ENCODE measurements at regions of chr19 and their contacts with region 1.

Region 1: DNA sequence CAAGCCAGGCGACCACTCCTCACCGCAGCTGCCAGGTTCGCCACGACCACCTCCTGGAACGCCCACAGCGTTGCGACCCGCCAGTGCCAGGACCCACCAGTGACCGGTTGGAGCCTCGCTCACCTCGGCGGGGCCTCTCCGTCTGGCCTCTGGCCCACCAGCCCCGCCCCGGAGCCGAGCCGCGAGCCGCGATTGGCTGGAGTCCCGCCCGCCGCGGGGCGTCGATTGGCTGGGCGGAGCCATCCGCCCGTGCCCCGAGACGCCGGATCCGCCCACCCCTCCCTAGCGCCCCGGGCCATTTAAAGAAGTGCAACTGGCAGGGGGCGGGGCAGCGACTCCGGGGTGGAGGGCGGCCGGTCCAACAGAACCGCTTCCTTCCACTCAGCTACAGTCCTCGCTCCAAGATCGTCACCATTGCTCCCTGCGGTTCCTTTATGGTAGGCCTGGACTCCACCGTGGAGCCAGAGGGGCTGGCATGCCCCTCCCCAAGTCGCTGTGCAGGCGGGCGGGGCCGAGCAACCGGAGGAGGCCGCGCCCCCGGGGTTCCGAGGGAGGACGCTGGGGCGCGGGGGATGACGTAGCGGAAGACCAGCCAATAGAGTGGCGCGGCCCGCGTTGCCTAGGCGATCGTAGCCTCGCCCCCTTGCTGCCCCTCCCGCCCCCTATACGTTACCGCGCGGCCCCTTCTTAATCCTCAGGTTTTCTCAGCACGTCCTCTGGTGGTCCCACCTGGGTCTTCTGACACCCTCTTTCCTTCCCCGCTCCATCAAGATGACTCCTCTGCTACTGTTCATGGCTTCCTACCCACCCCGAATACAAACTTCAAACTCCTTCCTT is at the start of gene SERTAD3:
- DNase-seq: peak; percentile 94 to 99 (median 98)
- ATAC-seq: peak; percentile 82
- H3K4me3 ChIP-seq: peak within 1 kb of the TSS; percentile 97
- H3K4me3 Mint-ChIP-seq: peak within 1 kb of the TSS; percentile 96 to 100 (median 98)
- H3K27ac ChIP-seq: peak within 1 kb of the TSS; percentile 89
- H3K27ac Mint-ChIP-seq: peak within 1 kb of the TSS; percentile 94 to 99 (median 97)
- H3K4me1 ChIP-seq: peaks cover 8 to 12% of the 10 kb centered on the region in 2 donors
- H3K4me1 Mint-ChIP-seq: peaks cover 17 to 31% (median 21%) of the 10 kb centered on the region in 7 donors
- H3K27me3 ChIP-seq: no peaks in the 10 kb centered on the region
- H3K27me3 Mint-ChIP-seq: no peaks in the 10 kb centered on the region
- total RNA-seq, gene SERTAD3: 15.2 to 44.1 (median 17.8) TPM

Region 2: DNA sequence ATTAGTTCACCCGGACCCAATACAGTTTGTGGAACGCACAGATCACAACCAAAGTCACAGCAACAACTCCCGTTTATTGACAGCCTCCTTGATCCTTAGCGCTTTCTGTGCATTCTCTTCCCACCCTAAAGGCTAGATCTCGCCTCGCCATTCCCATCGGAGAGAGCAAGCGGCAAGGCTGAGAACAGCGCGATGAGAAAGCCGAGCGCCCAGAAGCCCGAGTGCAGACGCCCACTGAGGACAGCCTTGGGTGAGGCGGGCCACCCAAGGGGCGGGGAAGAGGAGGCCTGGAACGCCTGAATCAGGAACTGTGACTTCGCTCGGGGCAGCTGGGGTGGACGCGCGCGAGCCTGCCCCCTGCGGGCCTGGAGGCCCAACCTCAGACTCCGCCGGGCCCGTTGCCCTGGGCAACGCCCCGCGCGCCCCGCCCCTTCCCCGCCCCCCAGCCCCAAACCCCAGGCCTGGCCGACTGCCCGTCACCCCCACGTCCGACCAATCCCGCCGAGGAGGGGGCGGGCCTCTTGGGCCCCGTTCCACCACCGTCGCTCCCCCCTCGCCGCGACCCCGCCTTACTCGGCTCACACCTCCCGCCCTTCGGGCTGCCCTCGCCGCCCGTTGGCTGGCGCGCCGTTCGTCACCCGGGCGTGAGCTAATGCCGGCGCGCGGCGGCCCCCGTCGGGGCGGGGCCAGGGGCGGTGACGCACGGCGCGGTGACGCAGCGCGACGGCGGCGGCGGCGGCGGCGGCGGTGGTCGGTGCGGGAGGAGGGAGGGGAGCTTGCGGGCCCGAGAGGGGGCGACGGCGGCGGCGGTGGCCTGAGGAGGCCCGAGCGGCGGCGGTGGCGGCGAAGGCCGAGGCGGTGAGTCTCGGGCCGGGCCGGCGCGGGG is 1102.4 kb before region 1 on chr19 and contains the start of gene SAMD4B:
- CTCF ChIA-PET with region 1: no interaction called
- POLR2A ChIA-PET with region 1: no interaction called
- intact Hi-C with region 1: loop called in 1 of 2 experiments (anchors 5 kb)
- DNase-seq: peak; percentile 97 to 100 (median 99)
- ATAC-seq: peak; percentile 93
- H3K4me3 ChIP-seq: peak within 1 kb of the TSS; percentile 95
- H3K4me3 Mint-ChIP-seq: peak within 1 kb of the TSS; percentile 90 to 100 (median 97)
- H3K27ac ChIP-seq: peak within 1 kb of the TSS; percentile 84
- H3K27ac Mint-ChIP-seq: peak within 1 kb of the TSS; percentile 90 to 97 (median 96)
- H3K4me1 ChIP-seq: peaks cover 23 to 42% of the 10 kb centered on the region in 2 donors
- H3K4me1 Mint-ChIP-seq: peaks cover 64 to 77% (median 73%) of the 10 kb centered on the region in 7 donors
- H3K27me3 ChIP-seq: no peaks in the 10 kb centered on the region
- H3K27me3 Mint-ChIP-seq: no peaks in the 10 kb centered on the region
- total RNA-seq, gene SAMD4B: 52.0 to 84.6 (median 65.6) TPM

Region 3: DNA sequence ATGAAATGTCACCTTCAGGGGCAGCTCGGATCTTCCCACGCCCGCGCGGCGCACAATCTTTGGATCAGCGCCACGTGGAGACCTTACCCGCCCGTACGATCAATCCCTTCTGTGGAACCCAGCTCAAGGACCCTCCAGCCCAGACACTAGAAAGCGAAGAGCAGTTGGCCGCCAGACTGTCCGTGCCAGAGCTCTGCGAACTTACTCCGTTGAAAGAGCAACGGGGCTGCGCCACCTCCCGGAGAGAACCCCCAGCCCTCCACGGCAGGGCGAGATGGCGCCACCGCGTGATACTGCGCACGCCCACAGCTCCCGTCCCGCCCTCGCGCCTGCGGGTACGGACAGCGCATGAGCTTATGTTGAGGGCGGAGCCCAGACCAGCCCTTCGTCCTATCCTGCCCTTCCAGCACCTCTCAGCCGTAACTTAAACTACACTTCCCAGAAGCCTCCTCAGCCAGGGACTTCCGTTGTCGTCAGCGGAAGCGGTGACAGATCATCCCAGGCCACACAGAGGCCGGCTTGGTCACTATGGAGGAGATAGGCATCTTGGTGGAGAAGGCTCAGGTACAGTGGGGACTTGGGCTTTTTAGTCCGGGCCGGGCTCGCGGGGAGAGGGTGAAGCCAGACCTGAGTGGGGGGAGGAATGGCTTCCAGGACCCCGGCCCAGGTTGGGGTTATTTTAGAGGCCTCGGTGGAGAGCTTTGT is 473.6 kb before region 1 on chr19 and contains the start of gene PSMC4:
- CTCF ChIA-PET with region 1: no interaction called
- POLR2A ChIA-PET with region 1: no interaction called
- intact Hi-C with region 1: loop called (anchors 5 to 10 kb)
- DNase-seq: peak; percentile 94 to 99 (median 98)
- ATAC-seq: peak; percentile 98
- H3K4me3 ChIP-seq: peak within 1 kb of the TSS; percentile 88
- H3K4me3 Mint-ChIP-seq: peak within 1 kb of the TSS; percentile 92 to 100 (median 94)
- H3K27ac ChIP-seq: peak within 1 kb of the TSS; percentile 95
- H3K27ac Mint-ChIP-seq: peak within 1 kb of the TSS; percentile 95 to 99 (median 97)
- H3K4me1 ChIP-seq: peaks cover 27 to 32% of the 10 kb centered on the region in 2 donors
- H3K4me1 Mint-ChIP-seq: peaks cover 39 to 61% (median 53%) of the 10 kb centered on the region in 7 donors
- H3K27me3 ChIP-seq: no peaks in the 10 kb centered on the region
- H3K27me3 Mint-ChIP-seq: no peaks in the 10 kb centered on the region
- total RNA-seq, gene PSMC4: 48.7 to 146 (median 69.1) TPM

Region 4: DNA sequence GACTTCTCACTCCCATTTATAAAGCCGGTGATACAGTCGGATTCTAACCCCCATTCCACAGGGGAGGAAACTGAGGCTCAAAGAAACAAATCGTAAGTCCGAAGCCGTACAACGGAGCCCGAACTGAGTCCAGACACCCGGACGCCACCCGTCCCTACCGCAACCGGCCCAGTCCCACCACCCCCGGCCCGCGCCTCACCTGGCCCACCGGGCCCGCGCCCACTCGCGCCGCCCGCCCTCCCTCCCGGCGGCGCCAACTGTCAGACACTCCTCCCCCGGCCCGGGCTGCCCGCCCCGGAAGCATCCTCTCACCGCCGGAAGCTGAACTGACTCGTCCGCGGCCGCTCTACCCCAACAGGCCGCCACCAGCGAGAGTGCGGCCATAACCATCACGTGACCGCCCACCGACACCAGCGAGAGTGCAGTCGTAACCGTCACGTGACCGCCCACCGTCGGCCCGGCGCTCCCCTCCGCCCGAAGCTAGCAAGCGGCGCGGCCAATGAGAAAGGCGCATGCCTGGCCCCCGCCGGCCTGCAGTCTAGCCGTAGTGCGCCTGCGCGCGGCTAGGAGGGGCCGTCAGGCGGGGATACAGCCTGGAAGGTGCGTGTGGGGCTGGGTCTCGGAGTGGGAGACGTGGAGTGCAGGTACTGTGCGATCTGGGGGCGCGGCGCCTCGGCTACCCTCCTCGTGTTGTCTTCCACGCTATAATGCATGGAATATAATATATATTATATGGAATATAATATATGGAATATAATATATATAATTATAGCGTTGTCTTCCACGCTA is 96.1 kb before region 1 on chr19 and contains the starts of genes C19orf47 and PLD3:
- CTCF ChIA-PET with region 1: no interaction called
- POLR2A ChIA-PET with region 1: interaction called, 7 read pairs
- intact Hi-C with region 1: loop called (anchors 1 kb)
- DNase-seq: peak; percentile 92 to 99 (median 97)
- ATAC-seq: peak; percentile 97
- H3K4me3 ChIP-seq: peak within 1 kb of the TSS; percentile 61
- H3K4me3 Mint-ChIP-seq: peak within 1 kb of the TSS; percentile 83 to 99 (median 96)
- H3K27ac ChIP-seq: peak within 1 kb of the TSS; percentile 86
- H3K27ac Mint-ChIP-seq: peak within 1 kb of the TSS; percentile 81 to 98 (median 93)
- H3K4me1 ChIP-seq: peaks cover 7 to 14% of the 10 kb centered on the region in 2 donors
- H3K4me1 Mint-ChIP-seq: peaks cover 20 to 51% (median 44%) of the 10 kb centered on the region in 7 donors
- H3K27me3 ChIP-seq: no peaks in the 10 kb centered on the region
- H3K27me3 Mint-ChIP-seq: peaks cover 0 to 2% (median 0%) of the 10 kb centered on the region in 5 donors
- total RNA-seq, gene C19orf47: 12.6 to 20.3 (median 15.8) TPM
- total RNA-seq, gene PLD3: 75.4 to 137 (median 114) TPM

Region 5: DNA sequence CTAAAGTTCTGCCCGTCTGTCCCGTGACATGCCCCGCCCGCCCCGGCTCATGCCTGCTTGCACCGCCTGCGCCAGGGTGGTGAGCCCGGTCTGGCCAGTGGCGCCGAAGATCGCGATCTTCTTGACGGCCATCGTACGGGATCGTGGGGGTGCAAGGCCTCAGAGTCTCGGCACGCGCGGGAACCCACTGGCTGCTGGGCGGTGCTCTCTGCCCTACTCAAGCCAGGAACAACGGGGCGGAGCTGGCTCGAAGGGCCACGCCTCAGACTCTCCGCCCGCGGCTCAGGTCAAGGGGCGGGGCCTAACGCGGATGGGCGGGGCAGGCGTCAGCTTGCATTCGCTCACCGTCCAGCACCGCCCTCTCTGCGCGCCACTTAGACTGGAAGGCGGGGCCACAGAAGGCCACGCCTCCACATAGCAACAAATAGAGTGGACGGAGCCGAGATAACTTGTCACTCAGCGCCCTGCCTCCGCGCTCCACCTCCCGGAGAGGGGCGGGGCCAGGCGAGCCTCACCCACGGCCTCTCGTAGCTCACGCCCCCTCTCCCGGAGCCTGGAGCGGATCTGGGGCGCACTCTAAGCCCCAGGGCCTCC is 21.2 kb after region 1 on chr19 and contains the start of gene BLVRB:
- CTCF ChIA-PET with region 1: interaction called, 5 read pairs
- POLR2A ChIA-PET with region 1: interaction called, 25 read pairs
- intact Hi-C with region 1: loop called (anchors 1 kb)
- DNase-seq: peak; percentile 98 to 100 (median 99)
- ATAC-seq: peak; percentile 90
- H3K4me3 ChIP-seq: peak within 1 kb of the TSS; percentile 44
- H3K4me3 Mint-ChIP-seq: peak within 1 kb of the TSS; percentile 83 to 95 (median 86)
- H3K27ac ChIP-seq: peak within 1 kb of the TSS; percentile 66
- H3K27ac Mint-ChIP-seq: peak within 1 kb of the TSS; percentile 70 to 94 (median 87)
- H3K4me1 ChIP-seq: peaks cover 0 to 7% of the 10 kb centered on the region in 2 donors
- H3K4me1 Mint-ChIP-seq: peaks cover 18 to 27% (median 25%) of the 10 kb centered on the region in 7 donors
- H3K27me3 ChIP-seq: peaks cover 3 to 4% of the 10 kb centered on the region in 2 donors
- H3K27me3 Mint-ChIP-seq: peaks cover 6 to 28% (median 7%) of the 10 kb centered on the region in 5 donors
- total RNA-seq, gene BLVRB: 11.0 to 42.2 (median 13.3) TPM

Region 6: DNA sequence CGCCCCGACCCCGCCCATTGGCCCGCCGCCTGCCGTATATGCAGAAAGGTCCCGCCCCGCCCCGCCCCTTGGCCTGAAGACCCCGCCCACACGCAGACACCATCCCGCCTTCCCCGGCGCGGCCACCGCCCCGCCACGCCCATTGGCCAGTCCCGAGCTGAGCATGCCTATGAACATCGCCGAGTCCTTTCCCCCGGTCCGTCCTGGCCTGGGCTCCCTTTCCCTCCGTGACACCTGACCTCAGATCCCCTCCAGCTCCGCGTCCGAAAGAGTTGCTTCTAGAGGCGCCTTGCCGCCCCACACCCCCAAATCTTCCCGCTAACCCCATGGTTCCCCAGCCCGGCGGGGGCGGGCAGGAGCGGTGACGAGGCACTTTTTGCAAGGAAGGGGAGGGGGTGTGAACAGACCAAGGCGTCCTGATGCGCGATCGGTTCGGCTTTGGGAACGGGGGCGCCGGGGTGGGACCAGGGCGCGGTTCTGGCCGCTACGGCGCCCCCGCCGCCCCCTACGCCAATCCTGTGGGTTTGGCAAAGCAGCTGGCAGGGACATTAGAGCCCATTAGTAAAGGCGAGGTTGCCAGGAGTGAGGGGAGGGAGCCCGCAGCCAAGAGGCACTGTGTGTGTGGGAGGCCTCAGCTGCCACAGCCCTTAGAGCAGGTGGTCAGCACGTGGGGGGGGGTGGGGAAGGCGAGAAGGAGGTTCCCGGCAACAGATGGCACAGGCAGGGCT is 246.4 kb after region 1 on chr19:
- CTCF ChIA-PET with region 1: no interaction called
- POLR2A ChIA-PET with region 1: no interaction called
- intact Hi-C with region 1: loop called in 1 of 2 experiments (anchors 5 kb)
- DNase-seq: peak; percentile 60 to 90 (median 75)
- ATAC-seq: peak; percentile 92
- H3K4me3 ChIP-seq: peak overlapping the region; percentile 68
- H3K4me3 Mint-ChIP-seq: peak overlapping the region in 9 of 10 donors; percentile 78 to 96 (median 91)
- H3K27ac ChIP-seq: peak overlapping the region; percentile 55
- H3K27ac Mint-ChIP-seq: peak overlapping the region in 8 of 9 donors; percentile 58 to 94 (median 74)
- H3K4me1 ChIP-seq: peaks cover 0 to 6% of the 10 kb centered on the region in 2 donors
- H3K4me1 Mint-ChIP-seq: peaks cover 0 to 6% (median 4%) of the 10 kb centered on the region in 7 donors
- H3K27me3 ChIP-seq: no peaks in the 10 kb centered on the region
- H3K27me3 Mint-ChIP-seq: no peaks in the 10 kb centered on the region

Region 7: GRCh38 chr19:41353466-41354342 is 909.3 kb after region 1 on chr19 and contains the start of gene TGFB1:
- CTCF ChIA-PET with region 1: no interaction called
- POLR2A ChIA-PET with region 1: no interaction called
- intact Hi-C with region 1: loop called (anchors 5 kb)
- DNase-seq: peak; percentile 89 to 94 (median 92)
- ATAC-seq: peak; percentile 85
- H3K4me3 ChIP-seq: peak within 1 kb of the TSS; percentile 94
- H3K4me3 Mint-ChIP-seq: peak within 1 kb of the TSS; percentile 92 to 100 (median 98)
- H3K27ac ChIP-seq: peak within 1 kb of the TSS; percentile 96
- H3K27ac Mint-ChIP-seq: peak within 1 kb of the TSS; percentile 94 to 100 (median 98)
- H3K4me1 ChIP-seq: peaks cover 44 to 70% of the 10 kb centered on the region in 2 donors
- H3K4me1 Mint-ChIP-seq: peaks cover 56 to 71% (median 59%) of the 10 kb centered on the region in 7 donors
- H3K27me3 ChIP-seq: no peaks in the 10 kb centered on the region
- H3K27me3 Mint-ChIP-seq: no peaks in the 10 kb centered on the region
- total RNA-seq, gene TGFB1: 91.2 to 322 (median 185) TPM

Measured in naive thymus-derived CD4-positive, alpha-beta T cell (primary cell).